A549 (cell line): ENCODE measurements at regions of chr12 and their contacts with region 1.

Region 1: GRCh38 chr12:7933255-7933729 is 2.7 kb downstream of the SLC2A3 start:
- DNase-seq: peak; percentile 90 to 94
- ATAC-seq: peak; percentile 93 to 97
- H3K4me3 ChIP-seq: peak overlapping the region; percentile 51; the same call in 2 of the 3 replicates
- H3K27ac ChIP-seq: peak overlapping the region; percentile 31 to 79; a peak in 5 of 6 replicates
- H3K4me1 ChIP-seq: peaks cover 14% of the 10 kb centered on the region
- CTCF ChIP-seq: peak; percentile 87
- EP300 ChIP-seq: no peak
- POLR2A ChIP-seq: no peak
- RAD21 ChIP-seq: peak; percentile 80 to 83

Region 2: DNA sequence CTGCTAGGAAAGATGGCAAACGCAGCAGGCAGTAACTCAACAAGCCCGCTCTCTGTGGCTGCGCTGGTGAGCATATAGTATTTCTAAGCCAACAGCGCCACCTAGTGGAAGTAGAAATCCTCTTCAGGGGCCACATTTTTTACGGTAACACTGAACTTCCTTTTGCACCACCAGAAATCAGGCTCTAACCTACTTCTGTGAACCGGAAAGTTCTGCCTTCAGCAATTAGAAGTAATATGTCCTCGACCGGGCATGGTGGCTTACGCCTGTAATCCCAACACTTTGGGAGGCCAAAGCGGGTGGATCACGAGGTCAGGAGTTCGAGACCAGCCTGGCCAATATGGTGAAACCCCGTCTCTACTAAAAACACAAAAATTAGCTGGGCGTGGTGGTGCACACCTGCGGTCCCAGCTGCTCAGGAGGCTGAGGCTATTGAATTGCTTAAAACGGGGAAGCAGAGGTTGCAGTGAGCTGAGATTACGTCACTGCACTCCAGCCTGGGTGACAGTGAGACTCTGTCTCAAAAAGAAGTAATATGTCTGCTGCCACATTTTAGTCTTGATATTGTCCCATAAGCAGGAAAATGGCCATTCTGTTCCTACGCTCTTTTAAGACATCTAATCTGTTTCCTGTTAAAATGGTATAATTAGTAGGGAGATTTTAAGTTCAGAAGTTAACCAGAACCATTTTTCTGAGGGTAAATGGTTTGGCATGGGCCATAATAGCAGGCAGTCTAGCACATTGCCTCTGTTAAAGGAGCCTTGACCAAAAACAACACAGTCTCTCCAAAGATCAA is 294.3 kb before region 1 on chr12:
- CTCF ChIA-PET with region 1: no interaction called
- POLR2A ChIA-PET with region 1: no interaction called
- DNase-seq: peak; percentile 63 to 83
- ATAC-seq: peak; percentile 96 to 97
- H3K4me3 ChIP-seq: no peak overlapping the region
- H3K27ac ChIP-seq: no peak overlapping the region
- H3K4me1 ChIP-seq: no peaks in the 10 kb centered on the region
- CTCF ChIP-seq: peak; percentile 91
- EP300 ChIP-seq: no peak
- POLR2A ChIP-seq: no peak
- RAD21 ChIP-seq: peak; percentile 95 to 96

Region 3: DNA sequence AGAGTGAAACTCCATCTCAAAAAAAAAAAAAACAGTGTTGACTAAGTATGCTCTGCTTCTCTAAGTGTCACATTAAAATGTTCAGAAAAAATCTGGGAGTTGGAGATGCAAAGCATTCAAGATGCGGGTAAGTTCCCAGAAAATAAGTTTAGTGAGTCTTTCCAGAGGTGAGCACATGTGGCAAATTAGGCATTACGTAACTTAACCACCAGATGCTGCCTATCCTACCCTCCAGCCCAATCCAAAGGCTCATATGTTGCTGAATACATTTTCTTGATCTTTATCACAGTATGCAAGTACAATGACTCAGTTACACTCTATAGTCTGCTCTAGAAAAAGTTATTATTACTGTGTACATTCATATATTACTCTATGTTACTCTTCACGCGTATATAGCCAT is 64.2 kb before region 1 on chr12:
- CTCF ChIA-PET with region 1: interaction called, 42 read pairs
- POLR2A ChIA-PET with region 1: interaction called, 5 read pairs
- DNase-seq: no peak
- ATAC-seq: no peak
- H3K4me3 ChIP-seq: no peak overlapping the region
- H3K27ac ChIP-seq: no peak overlapping the region
- H3K4me1 ChIP-seq: peaks cover 10% of the 10 kb centered on the region
- CTCF ChIP-seq: no peak
- EP300 ChIP-seq: no peak
- POLR2A ChIP-seq: no peak
- RAD21 ChIP-seq: no peak

Region 4: GRCh38 chr12:7948589-7949260 is 15.4 kb after region 1 on chr12:
- CTCF ChIA-PET with region 1: interaction called, 10 read pairs
- POLR2A ChIA-PET with region 1: interaction called, 4 read pairs
- DNase-seq: peak in 1 of 2 experiments; percentile 29
- ATAC-seq: peak; percentile 30 to 59; a peak in 2 of 6 replicates
- H3K4me3 ChIP-seq: no peak overlapping the region
- H3K27ac ChIP-seq: peak overlapping the region in 1 of 2 experiments; percentile 33; a peak in 1 of 6 replicates
- H3K4me1 ChIP-seq: 0 out of 3 replicates have a peak, but pooled peaks cover 9% of the 10 kb centered on the region
- CTCF ChIP-seq: no peak
- EP300 ChIP-seq: no peak
- POLR2A ChIP-seq: no peak
- RAD21 ChIP-seq: no peak

Region 5: GRCh38 chr12:7970475-7971252 is 37.4 kb after region 1 on chr12:
- CTCF ChIA-PET with region 1: interaction called, 66 read pairs
- POLR2A ChIA-PET with region 1: interaction called, 13 read pairs
- DNase-seq: peak; percentile 87 to 95
- ATAC-seq: peak; percentile 99 to 100
- H3K4me3 ChIP-seq: peak overlapping the region; percentile 55
- H3K27ac ChIP-seq: peak overlapping the region; percentile 83 to 87
- H3K4me1 ChIP-seq: peaks cover 9% of the 10 kb centered on the region; the same call in 2 of the 3 replicates
- CTCF ChIP-seq: no peak
- EP300 ChIP-seq: peak in 1 of 2 experiments; percentile 63; a peak in 1 of 5 replicates
- POLR2A ChIP-seq: peak; percentile 51
- RAD21 ChIP-seq: no peak; a peak in 1 of 5 replicates

Region 6: DNA sequence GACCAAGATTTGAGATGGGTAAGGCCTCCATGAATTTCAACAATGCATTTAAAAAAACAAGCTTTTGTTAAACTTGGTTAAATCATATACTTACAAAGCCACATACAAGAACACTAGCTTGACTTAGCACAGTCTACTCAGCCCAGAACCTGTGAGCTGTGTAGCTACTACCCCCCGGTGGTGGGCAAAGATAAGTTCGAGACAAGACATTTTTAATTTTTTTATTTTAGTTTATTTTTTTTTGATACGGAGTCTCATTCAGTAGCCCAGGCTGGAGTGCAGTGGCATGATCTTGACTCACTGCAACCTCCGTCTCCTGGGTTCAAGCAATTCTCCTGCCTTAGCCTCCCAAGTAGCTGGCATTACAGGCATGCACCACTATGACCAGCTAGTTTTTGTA is 145.1 kb after region 1 on chr12:
- CTCF ChIA-PET with region 1: interaction called, 10 read pairs
- POLR2A ChIA-PET with region 1: no interaction called
- DNase-seq: peak in 1 of 2 experiments; percentile 68
- ATAC-seq: no peak
- H3K4me3 ChIP-seq: no peak overlapping the region
- H3K27ac ChIP-seq: no peak overlapping the region
- H3K4me1 ChIP-seq: peaks cover 27% of the 10 kb centered on the region
- CTCF ChIP-seq: peak; percentile 37; the same call in 2 of the 3 replicates
- EP300 ChIP-seq: no peak
- POLR2A ChIP-seq: no peak
- RAD21 ChIP-seq: peak; percentile 51 to 53; a peak in 4 of 5 replicates